ENCODE measurements at regions of chr18 and their contacts with region 1.

Region 1: GRCh38 chr18:55343396-55344073 is 244.5 kb downstream of the TCF4 start:
- DNase-seq: no peak
- ATAC-seq: peak; percentile 82
- H3K4me3 Mint-ChIP-seq: no peak overlapping the region
- H3K27ac Mint-ChIP-seq: no peak overlapping the region
- H3K4me1 Mint-ChIP-seq: peaks cover 18% of the 10 kb centered on the region
- H3K27me3 Mint-ChIP-seq: no peaks in the 10 kb centered on the region
- CTCF ChIP-seq: peak; percentile 34

Region 2: DNA sequence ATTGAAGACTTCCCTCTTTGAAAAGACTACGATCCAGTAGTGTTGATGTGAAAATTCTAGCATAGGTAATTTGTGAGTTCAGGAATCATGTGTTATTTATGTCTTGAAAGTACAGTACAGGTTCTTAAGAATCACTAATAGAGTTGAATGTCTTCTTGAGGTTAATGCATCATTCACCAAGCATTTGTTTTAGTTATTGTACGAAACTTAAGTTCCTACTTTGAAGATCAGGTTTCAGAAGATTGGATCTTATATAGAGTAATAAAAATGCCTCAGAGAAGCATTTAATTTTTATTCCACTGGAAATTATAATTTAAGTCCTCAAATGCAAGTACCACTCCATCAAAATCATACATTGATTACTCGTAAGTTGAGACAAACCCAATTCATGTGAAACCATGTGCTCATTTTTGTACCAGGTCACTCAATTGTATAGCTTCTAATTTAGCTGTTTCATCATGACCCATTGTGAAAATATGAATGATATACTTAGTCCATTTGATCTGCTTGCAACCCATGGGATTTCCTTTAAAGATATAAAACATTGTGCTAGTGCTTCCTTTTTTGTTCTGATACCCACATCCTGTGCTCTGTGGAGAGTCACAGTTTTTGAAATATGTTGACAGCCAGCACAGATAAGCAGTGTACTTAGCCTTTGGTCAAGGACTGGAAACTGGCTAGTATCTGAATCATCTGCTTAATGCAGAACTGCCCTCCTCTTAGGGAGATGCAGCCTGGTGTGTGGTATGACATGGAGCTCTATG is 537.8 kb before region 1 on chr18:
- CTCF ChIA-PET with region 1: no interaction called
- POLR2A ChIA-PET with region 1: no interaction called
- intact Hi-C with region 1: no loop called
- DNase-seq: no peak
- ATAC-seq: no peak
- H3K4me3 Mint-ChIP-seq: no peak overlapping the region
- H3K27ac Mint-ChIP-seq: no peak overlapping the region
- H3K4me1 Mint-ChIP-seq: peaks cover 8% of the 10 kb centered on the region
- H3K27me3 Mint-ChIP-seq: no peaks in the 10 kb centered on the region
- CTCF ChIP-seq: no peak

Region 3: DNA sequence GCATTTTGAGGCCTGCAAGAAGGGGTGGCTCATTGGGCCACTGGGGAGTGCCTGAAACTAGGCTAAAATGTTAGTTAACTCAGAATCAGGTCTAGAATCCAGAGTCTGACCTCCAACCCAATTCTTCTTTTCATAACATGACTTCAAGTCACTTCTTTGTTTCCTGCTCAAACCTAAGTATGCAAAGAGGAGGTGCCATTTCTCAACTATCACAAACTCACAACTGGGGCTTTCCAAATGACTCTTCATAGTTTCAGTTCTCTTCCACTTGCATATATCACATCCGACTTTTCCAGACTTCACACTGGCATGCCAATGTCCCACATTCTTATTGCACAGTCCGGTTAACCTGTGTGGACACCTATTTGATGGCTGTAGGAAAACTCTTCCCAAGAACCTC is 32.9 kb after region 1 on chr18:
- CTCF ChIA-PET with region 1: no interaction called
- POLR2A ChIA-PET with region 1: interaction called, 12 read pairs
- intact Hi-C with region 1: loop called (anchors 2 kb)
- DNase-seq: no peak
- ATAC-seq: peak; percentile 91
- H3K4me3 Mint-ChIP-seq: peak overlapping the region; percentile 13
- H3K27ac Mint-ChIP-seq: peak overlapping the region; percentile 87
- H3K4me1 Mint-ChIP-seq: peaks cover 41% of the 10 kb centered on the region
- H3K27me3 Mint-ChIP-seq: no peaks in the 10 kb centered on the region
- CTCF ChIP-seq: no peak

Region 4: DNA sequence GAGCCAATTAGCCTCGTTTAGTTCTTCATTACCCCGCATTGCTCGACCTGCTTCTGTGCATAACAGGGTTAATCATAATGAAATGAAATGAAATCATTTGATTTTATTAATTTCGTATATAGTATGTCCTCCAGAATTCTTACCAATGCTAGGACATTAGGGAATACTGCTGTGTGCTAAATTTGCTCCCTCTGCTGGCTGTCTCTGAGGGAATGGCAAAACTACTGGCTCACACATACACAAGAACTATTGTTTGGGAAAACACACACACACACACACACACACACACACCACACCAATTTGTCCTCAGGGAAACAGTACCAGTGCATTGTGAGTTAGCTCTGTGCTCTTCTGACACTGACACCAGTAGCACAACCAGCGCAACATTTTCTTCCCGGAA is 517.7 kb after region 1 on chr18:
- CTCF ChIA-PET with region 1: no interaction called
- POLR2A ChIA-PET with region 1: no interaction called
- intact Hi-C with region 1: loop called (anchors 2 kb)
- DNase-seq: no peak
- ATAC-seq: no peak
- H3K4me3 Mint-ChIP-seq: no peak overlapping the region
- H3K27ac Mint-ChIP-seq: no peak overlapping the region
- H3K4me1 Mint-ChIP-seq: no peaks in the 10 kb centered on the region
- H3K27me3 Mint-ChIP-seq: peaks cover 10% of the 10 kb centered on the region
- CTCF ChIP-seq: no peak

Region 5: GRCh38 chr18:56314396-56314795 is 970.9 kb after region 1 on chr18:
- CTCF ChIA-PET with region 1: interaction called, 7 read pairs
- POLR2A ChIA-PET with region 1: no interaction called
- intact Hi-C with region 1: loop called (anchors 2 kb)
- DNase-seq: no peak
- ATAC-seq: peak; percentile 47
- H3K4me3 Mint-ChIP-seq: no peak overlapping the region
- H3K27ac Mint-ChIP-seq: no peak overlapping the region
- H3K4me1 Mint-ChIP-seq: peaks cover 23% of the 10 kb centered on the region
- H3K27me3 Mint-ChIP-seq: no peaks in the 10 kb centered on the region
- CTCF ChIP-seq: no peak

Region 6: DNA sequence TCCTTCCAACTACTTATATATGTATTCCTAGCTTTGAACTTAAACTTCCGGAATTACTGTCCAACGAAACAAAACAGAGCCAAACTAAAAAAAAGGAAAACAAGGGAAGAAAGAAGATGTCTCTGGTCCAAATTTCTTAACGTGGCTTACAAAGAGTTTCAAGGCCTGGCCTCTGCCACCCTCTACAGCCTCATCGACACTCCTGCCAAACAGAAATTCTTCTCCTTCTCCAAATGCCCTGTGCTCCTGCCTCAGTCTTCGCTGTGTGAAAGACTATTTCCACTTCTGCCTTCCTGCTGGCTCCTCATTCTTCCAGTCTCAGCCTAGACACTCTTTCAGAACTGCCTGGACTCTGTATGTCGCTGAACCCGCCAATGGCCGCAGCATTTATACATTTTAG is 1045.7 kb after region 1 on chr18:
- CTCF ChIA-PET with region 1: no interaction called
- POLR2A ChIA-PET with region 1: no interaction called
- intact Hi-C with region 1: loop called (anchors 1 kb)
- DNase-seq: no peak
- ATAC-seq: no peak
- H3K4me3 Mint-ChIP-seq: no peak overlapping the region
- H3K27ac Mint-ChIP-seq: no peak overlapping the region
- H3K4me1 Mint-ChIP-seq: no peaks in the 10 kb centered on the region
- H3K27me3 Mint-ChIP-seq: no peaks in the 10 kb centered on the region
- CTCF ChIP-seq: no peak

Region 7: DNA sequence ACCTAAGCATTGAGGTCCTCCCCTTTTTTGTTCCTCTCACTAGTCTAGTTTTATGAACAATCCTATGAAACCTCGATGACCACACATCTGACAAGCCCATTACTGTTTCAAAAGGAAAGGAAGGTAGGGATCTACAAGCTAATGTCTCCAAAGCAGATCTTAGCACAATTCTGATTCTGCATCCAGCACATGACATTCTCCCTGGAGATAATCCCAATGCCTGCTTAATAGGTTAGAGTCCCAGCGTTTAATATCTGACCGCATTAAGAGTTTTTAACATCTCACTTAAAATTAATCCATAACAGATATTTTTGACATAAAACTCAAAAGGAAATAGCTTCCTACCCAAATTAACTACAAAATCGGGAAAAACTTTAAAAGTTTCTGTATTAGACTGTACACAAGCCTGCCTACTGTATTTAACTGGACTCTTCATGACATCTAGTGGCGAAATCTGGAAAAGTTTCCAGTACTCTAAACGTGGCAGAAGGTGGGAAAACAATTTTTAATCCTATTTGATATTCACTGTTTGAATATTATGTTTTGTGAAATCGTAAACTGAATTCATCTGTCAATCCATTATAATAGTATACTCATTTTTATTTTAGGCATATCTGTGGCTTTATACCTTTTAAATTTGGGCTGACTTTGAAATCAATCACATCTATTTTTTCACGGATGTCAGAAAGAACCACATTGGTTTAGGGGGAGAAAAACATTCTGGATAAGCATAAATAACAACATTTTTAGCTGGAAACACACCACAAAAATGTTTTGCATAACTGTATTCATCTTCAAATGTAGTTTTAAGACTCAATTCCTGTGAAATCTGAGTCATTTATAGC is 1232.5 kb after region 1 on chr18:
- CTCF ChIA-PET with region 1: interaction called, 6 read pairs
- POLR2A ChIA-PET with region 1: no interaction called
- intact Hi-C with region 1: loop called (anchors 1 kb)
- DNase-seq: no peak
- ATAC-seq: peak; percentile 64
- H3K4me3 Mint-ChIP-seq: no peak overlapping the region
- H3K27ac Mint-ChIP-seq: no peak overlapping the region
- H3K4me1 Mint-ChIP-seq: no peaks in the 10 kb centered on the region
- H3K27me3 Mint-ChIP-seq: peaks cover 5% of the 10 kb centered on the region
- CTCF ChIP-seq: no peak

Measured in activated B cell treated with CpG ODN at 0.5 μM for 24 hours (primary cell).